AG04450 (cell line): ENCODE measurements at regions of chr1 and their contacts with region 1.

Region 1: GRCh38 chr1:9455487-9456234 is 83.6 kb upstream of the SLC25A33 start:
- DNase-seq: no peak
- H3K4me3 ChIP-seq: no peak overlapping the region
- H3K27ac ChIP-seq: no peak overlapping the region
- H3K27me3 ChIP-seq: peaks cover 8% of the 10 kb centered on the region
- CTCF ChIP-seq: peak; percentile 87

Region 2: GRCh38 chr1:9269078-9269501 is 186.6 kb before region 1 on chr1:
- CTCF ChIA-PET with region 1: interaction called, 31 read pairs
- POLR2A ChIA-PET with region 1: no interaction called
- DNase-seq: no peak
- H3K4me3 ChIP-seq: no peak overlapping the region
- H3K27ac ChIP-seq: no peak overlapping the region
- H3K27me3 ChIP-seq: no peaks in the 10 kb centered on the region
- CTCF ChIP-seq: no peak

Region 3: DNA sequence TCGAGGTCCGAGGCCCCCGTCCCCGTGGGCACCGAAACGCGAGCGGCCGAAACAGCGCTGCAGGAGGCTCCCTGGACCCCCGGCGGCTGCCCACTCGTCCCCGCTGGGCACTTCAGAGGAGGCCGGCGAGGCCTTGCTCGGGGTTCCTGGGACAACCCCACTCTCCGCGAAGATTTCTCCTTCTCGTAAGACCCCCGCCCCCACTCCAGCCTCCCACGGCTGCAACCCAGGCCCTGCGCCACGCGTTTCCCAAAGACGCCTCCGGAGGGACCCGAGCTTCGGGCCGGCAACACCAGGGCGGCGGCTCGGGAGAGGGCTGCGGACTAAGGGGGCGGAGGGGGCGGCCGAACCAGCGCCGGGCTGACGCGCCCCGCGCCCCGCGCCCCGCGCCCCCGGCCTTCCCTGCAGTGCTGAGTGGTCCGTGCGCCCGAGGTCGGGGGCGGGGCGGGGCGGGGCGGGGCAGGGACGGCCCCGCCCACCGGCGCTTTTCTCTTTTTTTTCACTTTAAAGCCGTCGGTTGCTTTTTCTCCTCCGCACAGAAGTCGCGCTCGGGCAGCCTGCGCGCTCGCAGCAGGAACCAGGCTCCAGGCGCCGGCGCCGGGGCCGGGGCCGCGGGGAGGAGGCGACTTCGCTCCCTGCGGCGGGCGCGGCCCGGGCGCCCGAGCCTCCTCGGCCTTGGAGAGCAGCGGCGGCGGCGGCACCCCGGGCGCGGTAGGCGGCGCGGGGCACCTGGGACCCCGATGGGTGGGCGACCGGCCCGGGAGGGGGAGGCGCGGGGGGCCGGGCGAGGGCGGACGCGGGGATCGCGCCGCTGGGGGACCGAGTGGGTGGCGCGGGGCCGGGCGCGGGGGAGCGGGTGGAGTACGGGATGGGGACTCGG is 163.1 kb before region 1 on chr1 and contains the start of gene SPSB1:
- CTCF ChIA-PET with region 1: interaction called, 99 read pairs
- POLR2A ChIA-PET with region 1: no interaction called
- DNase-seq: no peak
- H3K4me3 ChIP-seq: peak within 1 kb of the TSS; percentile 99
- H3K27ac ChIP-seq: peak within 1 kb of the TSS; percentile 91
- H3K27me3 ChIP-seq: no peaks in the 10 kb centered on the region
- CTCF ChIP-seq: no peak
- polyA plus RNA-seq, gene SPSB1: 19.4 and 20.3 TPM in 2 replicates

Region 4: GRCh38 chr1:9466780-9467758 is 11.4 kb after region 1 on chr1:
- CTCF ChIA-PET with region 1: interaction called, 14 read pairs
- POLR2A ChIA-PET with region 1: interaction called, 3 read pairs
- DNase-seq: no peak
- H3K4me3 ChIP-seq: no peak overlapping the region
- H3K27ac ChIP-seq: no peak overlapping the region
- H3K27me3 ChIP-seq: peaks cover 5% of the 10 kb centered on the region
- CTCF ChIP-seq: no peak

Region 5: GRCh38 chr1:9494929-9495758 is 39.5 kb after region 1 on chr1:
- CTCF ChIA-PET with region 1: interaction called, 17 read pairs
- POLR2A ChIA-PET with region 1: no interaction called
- DNase-seq: no peak
- H3K4me3 ChIP-seq: peak overlapping the region; percentile 36
- H3K27ac ChIP-seq: no peak overlapping the region
- H3K27me3 ChIP-seq: peaks cover 15% of the 10 kb centered on the region
- CTCF ChIP-seq: peak; percentile 86